Gastrocnemius medialis (tissue), 4 donors: ENCODE measurements at regions of chr6 and their contacts with region 1.

Region 1: DNA sequence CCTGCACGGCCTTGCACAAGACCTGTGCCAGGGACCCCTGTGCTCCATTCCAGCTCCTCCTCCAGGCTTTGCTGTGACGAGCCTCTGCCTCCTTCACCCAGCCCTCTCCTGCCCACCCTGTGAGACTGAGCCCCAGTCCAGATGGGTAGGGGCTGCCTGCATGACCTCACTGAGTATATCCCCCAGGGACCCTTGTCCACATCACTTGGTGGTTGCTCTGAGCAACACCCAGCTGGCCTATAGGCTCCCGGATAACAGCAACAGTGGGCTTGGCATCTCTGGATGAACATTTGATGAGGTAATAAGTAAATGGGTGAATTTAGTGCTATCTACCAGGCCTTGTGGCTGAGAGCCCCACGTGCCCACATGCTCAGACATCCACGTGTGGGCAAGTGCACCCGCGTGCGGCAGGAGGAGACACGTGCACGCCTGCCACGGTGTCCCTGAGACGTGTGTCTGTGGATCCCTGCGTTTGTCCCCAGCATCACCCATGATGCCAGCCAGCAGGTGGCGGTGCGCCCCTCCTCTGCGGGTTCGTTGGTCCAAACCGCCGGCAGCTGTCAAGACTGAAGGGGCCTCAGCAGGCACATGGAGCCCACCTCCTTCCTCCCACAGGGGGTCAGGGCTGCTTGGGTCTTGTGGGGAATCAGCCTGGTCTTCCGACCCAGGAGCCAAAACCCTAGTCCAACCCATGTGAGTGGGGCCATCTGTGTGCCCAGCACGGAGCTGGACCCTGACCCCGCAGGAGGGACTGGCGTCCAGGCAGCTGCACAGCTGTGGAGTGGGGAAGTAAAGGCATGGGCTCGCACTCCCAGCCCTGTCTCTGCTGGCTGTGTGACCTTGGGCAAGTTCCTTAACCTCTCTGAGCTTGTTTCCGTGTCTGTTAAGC is 45.9 kb downstream of the FGD2 start:
- DNase-seq: peak; percentile 85 to 87
- ATAC-seq: peak; percentile 87 to 91
- H3K4me3 ChIP-seq: no peak overlapping the region
- H3K27ac ChIP-seq: peak overlapping the region in 1 of 4 donors; percentile 13
- H3K4me1 ChIP-seq: peaks cover 6 to 10% of the 10 kb centered on the region in 2 donors
- H3K27me3 ChIP-seq: no peaks in the 10 kb centered on the region
- CTCF ChIP-seq: peak; percentile 95 to 98 (median 97)
- POLR2A ChIP-seq: no peak

Region 2: GRCh38 chr6:37018198-37019064 is 33.0 kb before region 1 on chr6:
- in situ Hi-C with region 1: no loop called
- intact Hi-C with region 1: loop called (anchors 1 kb)
- DNase-seq: peak; percentile 79 to 90
- ATAC-seq: peak; percentile 96 to 98
- H3K4me3 ChIP-seq: no peak overlapping the region
- H3K27ac ChIP-seq: peak overlapping the region; percentile 40 to 67 (median 56)
- H3K4me1 ChIP-seq: peaks cover 9 to 11% of the 10 kb centered on the region in 2 donors
- H3K27me3 ChIP-seq: no peaks in the 10 kb centered on the region
- CTCF ChIP-seq: peak; percentile 84 to 95 (median 91)
- POLR2A ChIP-seq: no peak

Region 3: GRCh38 chr6:37038292-37039198 is 12.8 kb before region 1 on chr6:
- in situ Hi-C with region 1: no loop called
- intact Hi-C with region 1: no loop called
- DNase-seq: peak; percentile 35 to 43
- ATAC-seq: peak in 1 of 2 donors; percentile 53
- H3K4me3 ChIP-seq: no peak overlapping the region
- H3K27ac ChIP-seq: no peak overlapping the region
- H3K4me1 ChIP-seq: peaks cover 0 to 4% of the 10 kb centered on the region in 2 donors
- H3K27me3 ChIP-seq: no peaks in the 10 kb centered on the region
- CTCF ChIP-seq: no peak
- POLR2A ChIP-seq: no peak

Region 4: GRCh38 chr6:37177077-37177934 is 125.9 kb after region 1 on chr6:
- in situ Hi-C with region 1: loop called (anchors 5 kb)
- intact Hi-C with region 1: loop called (anchors 1 kb)
- DNase-seq: no peak
- ATAC-seq: no peak
- H3K4me3 ChIP-seq: no peak overlapping the region
- H3K27ac ChIP-seq: no peak overlapping the region
- H3K4me1 ChIP-seq: peaks cover 12 to 15% of the 10 kb centered on the region in 2 donors
- H3K27me3 ChIP-seq: no peaks in the 10 kb centered on the region
- CTCF ChIP-seq: no peak
- POLR2A ChIP-seq: no peak